T-cell (primary cell): ENCODE measurements at regions of chr18 and their contacts with region 1.

Region 1: GRCh38 chr18:70385474-70385873 is 96.6 kb downstream of the SOCS6 start:
- DNase-seq: no peak
- ATAC-seq: no peak
- H3K4me3 ChIP-seq: no peak overlapping the region
- H3K4me3 Mint-ChIP-seq: no peak overlapping the region
- H3K27ac ChIP-seq: no peak overlapping the region
- H3K27ac Mint-ChIP-seq: no peak overlapping the region
- H3K4me1 ChIP-seq: no peaks in the 10 kb centered on the region
- H3K4me1 Mint-ChIP-seq: no peaks in the 10 kb centered on the region
- H3K27me3 ChIP-seq: no peaks in the 10 kb centered on the region
- H3K27me3 Mint-ChIP-seq: peaks cover 0 to 3% of the 10 kb centered on the region in 2 donors

Region 2: DNA sequence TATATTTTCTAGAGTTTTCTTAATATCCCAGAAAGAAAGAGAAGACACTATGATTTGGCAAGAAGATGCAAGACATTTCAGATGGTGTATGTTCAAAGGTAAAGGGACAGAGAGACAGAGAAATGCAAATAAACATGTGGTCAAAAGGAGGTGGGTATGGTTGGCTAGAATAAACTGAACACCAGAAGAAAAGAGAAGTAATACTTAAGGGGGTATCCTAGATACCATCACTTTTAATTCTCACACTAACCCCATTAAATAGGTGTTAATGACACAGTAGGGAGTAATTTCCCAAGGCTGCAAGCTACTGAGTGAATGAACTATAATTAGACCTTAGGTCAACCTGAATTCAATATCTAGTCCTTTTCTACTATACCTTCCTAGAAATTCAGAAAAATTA is 326.6 kb before region 1 on chr18:
- CTCF ChIA-PET with region 1: no interaction called
- POLR2A ChIA-PET with region 1: no interaction called
- DNase-seq: no peak
- ATAC-seq: no peak
- H3K4me3 ChIP-seq: no peak overlapping the region
- H3K4me3 Mint-ChIP-seq: no peak overlapping the region
- H3K27ac ChIP-seq: no peak overlapping the region
- H3K27ac Mint-ChIP-seq: no peak overlapping the region
- H3K4me1 ChIP-seq: no peaks in the 10 kb centered on the region
- H3K4me1 Mint-ChIP-seq: no peaks in the 10 kb centered on the region
- H3K27me3 ChIP-seq: no peaks in the 10 kb centered on the region
- H3K27me3 Mint-ChIP-seq: no peaks in the 10 kb centered on the region

Region 3: GRCh38 chr18:70319185-70319584 is 66.3 kb before region 1 on chr18:
- CTCF ChIA-PET with region 1: no interaction called
- POLR2A ChIA-PET with region 1: interaction called in 1 of 2 experiments, 14 read pairs
- DNase-seq: no peak
- ATAC-seq: no peak
- H3K4me3 ChIP-seq: no peak overlapping the region
- H3K4me3 Mint-ChIP-seq: no peak overlapping the region
- H3K27ac ChIP-seq: no peak overlapping the region
- H3K27ac Mint-ChIP-seq: no peak overlapping the region
- H3K4me1 ChIP-seq: no peaks in the 10 kb centered on the region
- H3K4me1 Mint-ChIP-seq: no peaks in the 10 kb centered on the region
- H3K27me3 ChIP-seq: no peaks in the 10 kb centered on the region
- H3K27me3 Mint-ChIP-seq: peaks cover 0 to 2% of the 10 kb centered on the region in 2 donors

Region 4: GRCh38 chr18:70332694-70333093 is 52.8 kb before region 1 on chr18:
- CTCF ChIA-PET with region 1: no interaction called
- POLR2A ChIA-PET with region 1: no interaction called
- DNase-seq: no peak
- ATAC-seq: no peak
- H3K4me3 ChIP-seq: no peak overlapping the region
- H3K4me3 Mint-ChIP-seq: no peak overlapping the region
- H3K27ac ChIP-seq: no peak overlapping the region
- H3K27ac Mint-ChIP-seq: no peak overlapping the region
- H3K4me1 ChIP-seq: peaks cover 0 to 2% of the 10 kb centered on the region in 2 experiments
- H3K4me1 Mint-ChIP-seq: peaks cover 0 to 3% (median 0%) of the 10 kb centered on the region in 3 donors
- H3K27me3 ChIP-seq: no peaks in the 10 kb centered on the region
- H3K27me3 Mint-ChIP-seq: peaks cover 0 to 7% of the 10 kb centered on the region in 2 donors

Region 5: GRCh38 chr18:70405051-70405450 is 19.6 kb after region 1 on chr18:
- CTCF ChIA-PET with region 1: no interaction called
- POLR2A ChIA-PET with region 1: no interaction called
- DNase-seq: no peak
- ATAC-seq: no peak
- H3K4me3 ChIP-seq: no peak overlapping the region
- H3K4me3 Mint-ChIP-seq: no peak overlapping the region
- H3K27ac ChIP-seq: no peak overlapping the region
- H3K27ac Mint-ChIP-seq: no peak overlapping the region
- H3K4me1 ChIP-seq: no peaks in the 10 kb centered on the region
- H3K4me1 Mint-ChIP-seq: no peaks in the 10 kb centered on the region
- H3K27me3 ChIP-seq: peaks cover 0 to 3% of the 10 kb centered on the region in 2 experiments
- H3K27me3 Mint-ChIP-seq: peaks cover 0 to 3% of the 10 kb centered on the region in 2 donors

Region 6: GRCh38 chr18:70645971-70646370 is 260.5 kb after region 1 on chr18:
- CTCF ChIA-PET with region 1: no interaction called
- POLR2A ChIA-PET with region 1: no interaction called
- DNase-seq: no peak
- ATAC-seq: no peak
- H3K4me3 ChIP-seq: no peak overlapping the region
- H3K4me3 Mint-ChIP-seq: no peak overlapping the region
- H3K27ac ChIP-seq: no peak overlapping the region
- H3K27ac Mint-ChIP-seq: no peak overlapping the region
- H3K4me1 ChIP-seq: peaks cover 0 to 1% of the 10 kb centered on the region in 2 experiments
- H3K4me1 Mint-ChIP-seq: peaks cover 6 to 38% (median 14%) of the 10 kb centered on the region in 3 donors
- H3K27me3 ChIP-seq: no peaks in the 10 kb centered on the region
- H3K27me3 Mint-ChIP-seq: no peaks in the 10 kb centered on the region